CD8-positive, alpha-beta T cell (primary cell): ENCODE measurements at regions of chr15 and their contacts with region 1.

Region 1: DNA sequence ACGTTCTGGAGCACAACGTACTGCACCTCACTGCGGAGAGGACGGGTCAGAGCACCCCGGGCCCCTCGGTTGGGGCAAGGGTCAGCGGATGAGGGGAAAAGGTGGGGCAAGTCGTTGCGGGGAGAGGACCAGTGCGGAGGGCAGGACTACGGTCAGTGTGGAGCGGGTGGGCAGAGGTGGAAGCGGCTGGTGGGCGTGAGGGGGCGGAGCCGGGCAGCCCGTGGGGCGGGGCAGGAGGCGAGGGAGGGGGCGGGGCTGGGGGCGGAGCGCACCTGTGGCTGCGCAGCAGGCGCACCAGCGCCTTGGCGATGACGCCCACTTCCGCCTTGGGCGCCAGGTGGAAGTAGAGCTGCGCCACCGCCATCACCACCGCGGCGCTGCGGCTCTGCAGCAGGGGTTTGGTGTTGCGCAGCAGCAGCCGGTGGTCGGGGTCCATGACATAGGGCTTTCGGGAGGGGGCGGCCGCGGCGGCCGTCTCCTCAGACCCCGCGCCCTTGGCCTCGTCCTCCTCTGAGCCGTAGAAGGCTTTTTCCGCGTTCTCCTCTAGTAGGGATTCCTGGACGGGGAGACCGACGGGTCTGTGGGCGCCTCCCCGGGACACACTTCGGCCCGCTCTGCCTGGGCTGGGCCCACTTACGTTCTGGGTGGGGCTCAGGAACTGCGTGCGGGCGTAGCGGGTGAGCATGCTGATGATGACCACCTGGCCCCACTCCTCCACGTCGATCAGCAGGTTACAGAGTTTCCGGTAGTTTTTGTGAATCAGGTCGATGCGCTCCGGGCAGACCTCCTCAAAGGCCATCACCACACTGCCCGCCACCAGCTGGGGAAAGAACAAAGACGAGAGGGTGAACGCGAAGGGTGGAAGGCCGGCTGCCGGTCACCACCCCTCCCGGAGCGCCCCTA is 29.2 kb downstream of the AP3B2 start:
- DNase-seq: peak; percentile 65 to 92 (median 82)
- ATAC-seq: peak; percentile 95
- H3K4me3 ChIP-seq: peak overlapping the region; percentile 71 to 81
- H3K4me3 Mint-ChIP-seq: peak overlapping the region; percentile 91
- H3K27ac ChIP-seq: peak overlapping the region; percentile 68 to 76
- H3K27ac Mint-ChIP-seq: peak overlapping the region; percentile 96
- H3K4me1 ChIP-seq: peaks cover 12% of the 10 kb centered on the region
- H3K4me1 Mint-ChIP-seq: peaks cover 13% of the 10 kb centered on the region
- H3K27me3 ChIP-seq: peaks cover 0 to 3% of the 10 kb centered on the region in 2 experiments
- H3K27me3 Mint-ChIP-seq: no peaks in the 10 kb centered on the region
- CTCF ChIP-seq: peak; percentile 25

Region 2: DNA sequence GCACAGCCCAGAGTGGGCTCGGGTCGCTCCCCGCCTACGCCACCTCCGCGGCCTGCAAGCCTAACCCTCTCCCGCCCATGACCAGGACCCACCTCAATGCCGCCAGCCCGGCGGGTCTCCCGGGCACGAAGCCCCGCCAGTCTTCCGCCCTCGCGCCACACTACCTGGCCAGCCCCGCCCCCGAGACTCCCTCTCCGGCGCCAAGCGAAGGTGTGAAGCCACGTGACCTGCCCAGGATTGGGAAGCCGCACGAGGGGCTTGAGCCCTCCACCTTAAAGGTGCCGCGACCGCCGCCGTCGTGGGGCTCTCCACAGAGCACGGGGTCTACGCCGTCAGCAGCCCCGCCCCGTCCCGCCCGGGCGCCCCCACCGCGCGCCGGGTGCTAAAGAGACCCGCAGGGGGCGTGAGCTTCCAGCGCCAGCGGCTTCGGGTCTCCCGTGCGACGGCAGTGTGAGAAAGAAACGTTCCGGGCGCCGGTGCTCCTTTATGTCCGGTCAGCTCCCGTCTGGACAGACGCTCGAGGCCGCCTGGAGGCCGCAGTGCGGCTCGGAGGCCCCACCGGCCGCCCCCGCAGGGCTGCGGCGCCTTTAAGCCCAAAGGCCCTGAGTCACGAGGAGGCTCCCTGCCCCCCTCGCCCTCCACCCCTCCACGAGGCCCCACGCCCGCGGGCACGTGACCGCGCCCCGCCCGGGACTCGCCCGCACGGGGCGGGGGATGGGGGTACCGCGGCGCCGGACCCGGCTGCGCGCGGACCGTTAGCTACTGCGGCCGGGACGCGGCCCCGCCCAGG is 33.2 kb before region 1 on chr15 and contains the start of gene CPEB1:
- CTCF ChIA-PET with region 1: interaction called, 5 read pairs
- POLR2A ChIA-PET with region 1: interaction called, 3 read pairs
- intact Hi-C with region 1: loop called (anchors 1 to 2 kb)
- DNase-seq: peak in 8 of 9 experiments; percentile 9 to 64 (median 50)
- ATAC-seq: peak; percentile 60
- H3K4me3 ChIP-seq: peak within 1 kb of the TSS; percentile 32 to 60
- H3K4me3 Mint-ChIP-seq: peak within 1 kb of the TSS; percentile 78
- H3K27ac ChIP-seq: no peak within 1 kb of the TSS
- H3K27ac Mint-ChIP-seq: no peak within 1 kb of the TSS
- H3K4me1 ChIP-seq: peaks cover 20% of the 10 kb centered on the region
- H3K4me1 Mint-ChIP-seq: peaks cover 12% of the 10 kb centered on the region
- H3K27me3 ChIP-seq: peaks cover 0 to 11% of the 10 kb centered on the region in 2 experiments
- H3K27me3 Mint-ChIP-seq: peaks cover 21% of the 10 kb centered on the region
- CTCF ChIP-seq: peak; percentile 22
- total RNA-seq, gene CPEB1: 0.27 to 0.53 TPM

Region 3: DNA sequence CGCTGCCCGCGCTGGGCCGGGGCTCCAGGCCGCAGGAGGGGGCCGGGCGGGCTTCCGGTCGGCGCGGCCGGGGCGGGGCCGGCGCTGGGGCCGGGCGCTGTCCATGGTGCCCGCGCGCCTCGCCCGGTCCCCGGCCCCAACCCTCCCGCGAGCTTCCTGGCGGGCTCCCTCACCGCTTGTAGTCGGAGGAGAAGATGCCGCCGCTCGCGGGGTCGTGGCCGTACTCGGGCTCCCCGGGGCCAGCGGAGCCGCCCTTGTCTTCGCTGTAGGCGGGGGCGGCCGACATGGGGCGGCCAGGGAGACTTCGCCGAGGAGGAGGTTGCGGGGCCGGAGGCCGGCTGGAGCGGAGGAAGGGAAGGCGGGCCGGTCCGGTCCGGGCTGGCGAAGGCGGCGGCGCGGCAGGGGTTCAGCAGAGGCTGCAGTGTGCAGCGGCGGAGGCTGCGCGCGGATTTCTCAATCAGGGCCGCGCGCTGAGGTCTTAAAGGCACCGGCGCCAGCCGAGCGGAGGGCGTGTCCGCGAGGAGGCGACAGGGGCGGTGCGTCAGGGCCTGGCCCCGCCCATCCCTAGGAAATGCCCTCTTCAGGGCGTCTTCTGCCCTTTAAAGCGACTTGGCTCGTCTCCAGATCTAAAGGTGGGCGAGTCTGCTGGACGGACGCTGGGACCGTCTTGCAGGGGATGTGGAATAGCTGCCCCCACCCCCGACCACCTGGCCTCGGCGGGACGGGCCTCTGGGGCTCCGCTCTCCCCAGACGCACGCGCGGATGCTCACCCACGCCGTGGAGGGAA is 29.2 kb after region 1 on chr15 and contains the start of gene AP3B2:
- CTCF ChIA-PET with region 1: interaction called, 3 read pairs
- POLR2A ChIA-PET with region 1: interaction called, 7 read pairs
- intact Hi-C with region 1: loop called (anchors 1 to 2 kb)
- DNase-seq: peak; percentile 40 to 82 (median 67)
- ATAC-seq: peak; percentile 95
- H3K4me3 ChIP-seq: peak within 1 kb of the TSS; percentile 44 to 81
- H3K4me3 Mint-ChIP-seq: peak within 1 kb of the TSS; percentile 76
- H3K27ac ChIP-seq: no peak within 1 kb of the TSS
- H3K27ac Mint-ChIP-seq: no peak within 1 kb of the TSS
- H3K4me1 ChIP-seq: peaks cover 13% of the 10 kb centered on the region
- H3K4me1 Mint-ChIP-seq: peaks cover 1% of the 10 kb centered on the region
- H3K27me3 ChIP-seq: peaks cover 0 to 6% of the 10 kb centered on the region in 2 experiments
- H3K27me3 Mint-ChIP-seq: peaks cover 25% of the 10 kb centered on the region
- CTCF ChIP-seq: no peak
- total RNA-seq, gene AP3B2: 0.81 to 0.90 TPM

Region 4: GRCh38 chr15:82809404-82810060 is 129.1 kb after region 1 on chr15 and contains the start of gene WHAMM:
- CTCF ChIA-PET with region 1: no interaction called
- POLR2A ChIA-PET with region 1: interaction called, 13 read pairs
- intact Hi-C with region 1: loop called (anchors 1 to 5 kb)
- DNase-seq: peak; percentile 89 to 98 (median 94)
- ATAC-seq: peak; percentile 93
- H3K4me3 ChIP-seq: peak within 1 kb of the TSS; percentile 67 to 69
- H3K4me3 Mint-ChIP-seq: peak within 1 kb of the TSS; percentile 92
- H3K27ac ChIP-seq: peak within 1 kb of the TSS; percentile 93 to 97
- H3K27ac Mint-ChIP-seq: peak within 1 kb of the TSS; percentile 97
- H3K4me1 ChIP-seq: peaks cover 26% of the 10 kb centered on the region
- H3K4me1 Mint-ChIP-seq: peaks cover 32% of the 10 kb centered on the region
- H3K27me3 ChIP-seq: no peaks in the 10 kb centered on the region
- H3K27me3 Mint-ChIP-seq: no peaks in the 10 kb centered on the region
- CTCF ChIP-seq: no peak
- total RNA-seq, gene WHAMM: 123 to 124 TPM

Region 5: GRCh38 chr15:83011271-83012075 is 331.0 kb after region 1 on chr15 and contains the start of gene C15orf40:
- CTCF ChIA-PET with region 1: no interaction called
- POLR2A ChIA-PET with region 1: no interaction called
- intact Hi-C with region 1: loop called in 1 of 2 experiments (anchors 1 kb)
- DNase-seq: peak; percentile 62 to 94 (median 86)
- ATAC-seq: peak; percentile 80
- H3K4me3 ChIP-seq: peak within 1 kb of the TSS; percentile 86 to 95
- H3K4me3 Mint-ChIP-seq: peak within 1 kb of the TSS; percentile 100
- H3K27ac ChIP-seq: peak within 1 kb of the TSS; percentile 75 to 79
- H3K27ac Mint-ChIP-seq: peak within 1 kb of the TSS; percentile 99
- H3K4me1 ChIP-seq: peaks cover 26% of the 10 kb centered on the region
- H3K4me1 Mint-ChIP-seq: peaks cover 58% of the 10 kb centered on the region
- H3K27me3 ChIP-seq: no peaks in the 10 kb centered on the region
- H3K27me3 Mint-ChIP-seq: no peaks in the 10 kb centered on the region
- CTCF ChIP-seq: no peak
- total RNA-seq, gene C15orf40: 11.8 to 12.3 TPM